OCI-LY7 (cell line): ENCODE measurements at regions of chr12 and their contacts with region 1.

Region 1: DNA sequence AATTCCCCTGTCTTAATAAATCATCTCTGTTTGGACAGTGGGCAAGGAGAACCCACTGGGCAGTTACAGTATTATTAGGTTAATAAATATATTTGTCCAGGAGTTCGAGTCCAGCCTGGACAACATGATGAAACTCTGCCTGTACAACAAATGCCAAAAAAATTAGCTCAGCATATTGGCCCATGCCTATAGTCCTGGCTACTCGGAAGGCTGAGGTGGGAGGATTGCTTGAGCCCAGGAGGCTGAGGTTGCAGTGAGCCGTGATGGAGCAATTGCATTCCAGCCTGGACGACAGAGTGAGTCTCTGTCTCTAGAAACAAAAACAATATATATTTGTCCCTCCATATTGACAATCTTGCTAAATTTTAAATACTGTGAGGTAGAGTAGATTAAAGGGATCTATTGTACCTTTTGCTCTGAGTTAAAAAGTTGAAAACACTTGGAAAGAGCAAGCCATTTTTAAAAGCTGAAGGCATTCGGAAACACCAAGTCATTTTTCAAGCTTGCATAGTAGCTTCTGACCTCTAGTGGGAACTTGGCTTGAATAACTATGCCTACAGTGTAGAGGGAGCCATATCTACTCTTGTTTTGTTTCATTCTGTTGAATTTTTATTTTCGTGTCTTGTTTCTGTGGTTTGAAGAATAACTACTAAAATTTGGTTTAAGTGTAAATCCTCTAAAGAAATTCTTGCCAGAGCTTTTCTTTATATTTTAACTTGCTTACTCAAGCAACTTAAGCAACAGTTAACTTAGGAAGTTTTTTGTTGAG is 14.6 kb upstream of the EEA1 start:
- DNase-seq: peak; percentile 21
- H3K4me3 ChIP-seq: no peak overlapping the region
- H3K27ac ChIP-seq: no peak overlapping the region
- H3K4me1 ChIP-seq: no peaks in the 10 kb centered on the region
- CTCF ChIP-seq: no peak; the same call in 1 of the 2 replicates

Region 2: GRCh38 chr12:93060666-93061471 is 117.2 kb after region 1 on chr12:
- CTCF ChIA-PET with region 1: no interaction called
- POLR2A ChIA-PET with region 1: interaction called, 13 read pairs
- intact Hi-C with region 1: no loop called
- DNase-seq: no peak
- H3K4me3 ChIP-seq: no peak overlapping the region
- H3K27ac ChIP-seq: no peak overlapping the region
- H3K4me1 ChIP-seq: no peaks in the 10 kb centered on the region
- CTCF ChIP-seq: no peak

Region 3: DNA sequence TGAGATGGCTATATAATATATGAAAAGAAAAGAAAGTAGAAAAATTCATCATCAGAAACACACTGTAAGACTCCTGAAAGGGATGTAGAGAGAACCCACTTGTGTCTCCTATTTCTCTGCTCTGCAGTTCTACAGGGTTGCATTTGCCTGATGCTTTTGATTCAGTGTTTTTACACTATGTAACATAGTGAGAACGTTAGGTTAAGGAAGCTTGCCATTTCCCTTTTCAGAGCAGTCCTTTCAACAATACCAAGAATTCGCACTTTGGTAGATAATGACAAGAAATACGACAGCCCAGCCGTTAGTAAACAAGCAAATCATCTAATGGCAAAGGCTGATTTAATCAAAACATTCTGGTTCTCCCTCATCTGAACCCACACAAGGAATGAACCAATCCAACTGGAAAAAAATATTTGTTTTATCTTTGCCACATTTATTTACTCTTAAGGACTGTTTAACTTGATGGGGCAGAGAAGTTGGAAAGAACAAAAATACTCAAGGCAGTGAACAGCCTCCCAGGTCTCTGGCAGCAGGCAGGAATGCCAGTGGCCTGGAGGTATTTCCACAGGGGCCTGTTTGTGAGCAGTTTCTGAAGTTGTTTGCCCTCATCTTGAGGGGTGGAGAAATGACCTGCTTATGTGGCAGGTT is 598.0 kb after region 1 on chr12:
- CTCF ChIA-PET with region 1: no interaction called
- POLR2A ChIA-PET with region 1: interaction called, 10 read pairs
- intact Hi-C with region 1: no loop called
- DNase-seq: no peak
- H3K4me3 ChIP-seq: no peak overlapping the region
- H3K27ac ChIP-seq: no peak overlapping the region
- H3K4me1 ChIP-seq: peaks cover 11% of the 10 kb centered on the region
- CTCF ChIP-seq: no peak